PC-3 (cell line): ENCODE measurements at regions of chr15 and their contacts with region 1.

Region 1: DNA sequence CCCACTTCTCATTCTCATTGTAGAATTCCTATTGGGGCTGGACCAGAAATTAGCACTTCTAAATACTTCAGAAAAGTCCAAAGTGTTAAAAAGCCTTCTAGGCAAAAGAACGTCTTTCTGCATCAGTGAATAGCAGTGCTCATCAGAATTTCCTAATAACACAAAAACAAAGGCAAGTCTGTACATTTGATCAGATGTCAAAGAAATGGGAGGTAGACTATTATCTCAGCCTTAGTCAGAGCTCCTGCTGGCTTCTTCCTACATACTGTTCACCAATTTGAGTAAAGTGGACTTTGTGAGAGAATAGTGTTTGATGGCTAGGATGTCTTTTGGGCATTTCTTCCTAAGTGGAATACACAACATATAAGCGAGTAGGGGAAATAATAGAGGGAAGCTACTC is 48.7 kb downstream of the FOXB1 start:
- DNase-seq: peak; percentile 5
- ATAC-seq: no peak
- H3K4me3 ChIP-seq: no peak overlapping the region
- H3K27ac ChIP-seq: no peak overlapping the region
- H3K4me1 ChIP-seq: no peaks in the 10 kb centered on the region
- H3K27me3 ChIP-seq: no peaks in the 10 kb centered on the region
- CTCF ChIP-seq: no peak

Region 2: DNA sequence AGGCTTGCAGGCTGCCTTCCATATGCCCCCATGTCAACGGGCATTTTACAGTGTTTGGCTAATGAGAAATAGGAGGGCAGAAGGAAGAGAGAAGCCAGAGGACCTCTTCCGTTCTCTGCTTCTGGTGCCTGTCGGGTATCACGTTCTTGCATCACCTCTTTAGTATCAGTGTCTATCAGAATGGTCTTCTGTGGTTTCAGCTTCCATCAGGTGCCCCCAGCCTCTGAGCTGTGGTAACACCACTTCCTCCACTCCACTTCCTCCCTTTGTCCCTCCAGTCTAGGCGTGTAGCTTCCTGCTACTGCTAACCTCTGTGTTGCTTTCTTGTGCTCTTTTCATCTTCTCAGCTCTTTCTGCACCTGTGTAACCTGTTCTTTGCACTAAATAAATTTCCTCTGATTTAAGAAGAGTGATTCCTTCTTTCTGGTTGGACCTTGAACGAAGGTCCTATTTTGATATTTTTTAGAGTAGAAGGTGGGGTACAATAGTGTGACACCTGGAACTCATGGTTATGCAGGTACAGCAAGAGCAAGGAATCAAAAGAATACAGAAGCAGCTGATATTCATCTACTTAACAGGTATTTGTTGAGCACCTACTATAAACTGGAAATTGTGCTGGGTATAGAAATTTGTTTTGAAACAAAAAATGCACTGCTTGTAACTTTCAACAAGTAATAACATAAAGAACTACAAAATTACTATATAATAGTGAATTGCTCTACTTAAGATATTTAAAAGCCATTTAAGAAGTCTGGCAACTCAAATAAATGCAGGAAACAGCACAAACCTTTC is 76.1 kb before region 1 on chr15:
- CTCF ChIA-PET with region 1: no interaction called
- POLR2A ChIA-PET with region 1: no interaction called
- intact Hi-C with region 1: no loop called
- DNase-seq: no peak
- ATAC-seq: no peak
- H3K4me3 ChIP-seq: no peak overlapping the region
- H3K27ac ChIP-seq: no peak overlapping the region
- H3K4me1 ChIP-seq: no peaks in the 10 kb centered on the region
- H3K27me3 ChIP-seq: peaks cover 69% of the 10 kb centered on the region
- CTCF ChIP-seq: no peak

Region 3: GRCh38 chr15:60035344-60035743 is 17.5 kb before region 1 on chr15:
- CTCF ChIA-PET with region 1: no interaction called
- POLR2A ChIA-PET with region 1: no interaction called
- intact Hi-C with region 1: no loop called
- DNase-seq: peak; percentile 48
- ATAC-seq: peak; percentile 83
- H3K4me3 ChIP-seq: no peak overlapping the region
- H3K27ac ChIP-seq: no peak overlapping the region
- H3K4me1 ChIP-seq: peaks cover 4% of the 10 kb centered on the region; the same call in 1 of the 2 replicates
- H3K27me3 ChIP-seq: peaks cover 15% of the 10 kb centered on the region; the same call in 1 of the 2 replicates
- CTCF ChIP-seq: no peak

Region 4: GRCh38 chr15:60134609-60135008 is 81.8 kb after region 1 on chr15:
- CTCF ChIA-PET with region 1: interaction called, 12 read pairs
- POLR2A ChIA-PET with region 1: no interaction called
- intact Hi-C with region 1: no loop called
- DNase-seq: peak; percentile 32
- ATAC-seq: peak; percentile 51
- H3K4me3 ChIP-seq: no peak overlapping the region
- H3K27ac ChIP-seq: no peak overlapping the region
- H3K4me1 ChIP-seq: no peaks in the 10 kb centered on the region
- H3K27me3 ChIP-seq: peaks cover 10% of the 10 kb centered on the region; the same call in 1 of the 2 replicates
- CTCF ChIP-seq: peak; percentile 61